ENCODE measurements at regions of chr4 and their contacts with region 1.

Region 1: GRCh38 chr4:91123742-91124141 is 996.5 kb downstream of the CCSER1 start:
- DNase-seq: no peak
- ATAC-seq: no peak
- H3K4me3 Mint-ChIP-seq: no peak overlapping the region
- H3K27ac Mint-ChIP-seq: no peak overlapping the region
- H3K4me1 Mint-ChIP-seq: no peaks in the 10 kb centered on the region
- H3K27me3 Mint-ChIP-seq: no peaks in the 10 kb centered on the region

Region 2: DNA sequence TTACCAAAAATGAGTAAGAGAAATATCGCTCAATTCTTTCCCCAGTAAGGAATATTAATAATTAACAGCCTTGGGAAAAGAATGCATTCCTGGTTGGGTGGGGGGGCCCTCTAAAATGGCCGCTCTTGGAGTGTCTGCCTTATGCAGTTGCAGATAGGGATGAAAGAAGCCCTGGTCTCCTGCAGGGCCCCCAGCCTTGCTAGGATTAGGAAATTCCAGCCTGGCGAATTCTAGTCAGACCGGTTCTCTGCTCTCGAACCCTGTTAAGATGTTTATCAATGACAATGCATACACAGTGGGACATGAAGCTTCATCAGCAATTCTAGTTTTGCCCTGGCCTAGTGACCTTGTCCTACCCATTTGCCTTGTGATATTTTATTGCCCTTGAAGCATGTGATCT is 132.3 kb after region 1 on chr4:
- CTCF ChIA-PET with region 1: no interaction called
- POLR2A ChIA-PET with region 1: no interaction called
- intact Hi-C with region 1: no loop called
- DNase-seq: no peak
- ATAC-seq: no peak
- H3K4me3 Mint-ChIP-seq: no peak overlapping the region
- H3K27ac Mint-ChIP-seq: no peak overlapping the region
- H3K4me1 Mint-ChIP-seq: no peaks in the 10 kb centered on the region
- H3K27me3 Mint-ChIP-seq: no peaks in the 10 kb centered on the region

Region 3: DNA sequence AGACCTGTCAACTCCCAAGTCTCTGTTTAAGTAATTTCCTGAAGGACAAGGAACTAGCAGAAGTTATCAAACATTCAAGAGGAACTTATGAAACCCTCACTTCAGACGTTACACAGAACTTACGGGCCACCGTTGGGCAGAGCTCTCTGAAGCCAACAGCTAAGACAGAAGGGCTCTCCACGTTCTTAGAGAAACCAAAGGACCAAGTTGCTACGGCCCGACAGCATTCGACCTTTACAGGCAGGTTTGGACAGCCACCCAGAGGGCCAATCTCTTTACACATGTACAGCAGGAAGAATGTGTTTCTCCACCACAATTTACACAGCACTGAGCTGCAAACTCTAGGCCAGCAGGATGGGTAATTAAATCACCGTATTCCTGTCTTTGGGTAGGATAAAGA is 475.0 kb after region 1 on chr4:
- CTCF ChIA-PET with region 1: no interaction called
- POLR2A ChIA-PET with region 1: no interaction called
- intact Hi-C with region 1: loop called in 1 of 2 experiments (anchors 5 kb)
- DNase-seq: no peak
- ATAC-seq: no peak
- H3K4me3 Mint-ChIP-seq: no peak overlapping the region
- H3K27ac Mint-ChIP-seq: no peak overlapping the region
- H3K4me1 Mint-ChIP-seq: no peaks in the 10 kb centered on the region
- H3K27me3 Mint-ChIP-seq: no peaks in the 10 kb centered on the region